Mammary epithelial cell (primary cell): ENCODE measurements at regions of chr1 and their contacts with region 1.

Region 1: DNA sequence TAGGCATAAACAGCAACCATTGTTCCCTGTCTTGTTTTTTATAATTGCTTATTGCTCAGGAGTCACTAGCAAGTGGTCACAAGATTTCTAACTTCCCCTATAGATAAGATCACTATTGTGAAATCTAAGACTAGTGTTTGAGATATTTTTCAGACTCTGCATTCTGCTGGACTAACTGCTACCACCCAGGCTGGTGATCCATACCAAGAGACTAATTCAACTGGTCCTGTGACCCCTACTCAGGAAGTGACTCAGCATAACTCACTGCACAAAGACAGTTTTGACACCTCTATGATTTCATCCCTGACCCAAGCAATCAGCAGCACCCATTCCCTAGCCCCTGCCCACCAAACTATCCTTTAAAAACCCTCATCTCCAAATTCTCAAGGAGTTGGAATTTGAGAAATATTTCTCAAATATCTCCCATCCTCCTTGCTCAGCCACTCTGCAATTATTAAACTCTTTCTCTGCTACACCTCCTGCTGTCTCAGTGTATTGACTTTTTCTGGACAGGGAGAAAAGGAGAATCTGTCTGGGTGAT is 52.7 kb downstream of the TRIM33 start:
- DNase-seq: peak; percentile 88
- H3K4me3 ChIP-seq: no peak overlapping the region
- H3K27ac ChIP-seq: peak overlapping the region; percentile 36
- H3K4me1 ChIP-seq: peaks cover 12% of the 10 kb centered on the region
- H3K27me3 ChIP-seq: no peaks in the 10 kb centered on the region
- CTCF ChIP-seq: no peak

Region 2: DNA sequence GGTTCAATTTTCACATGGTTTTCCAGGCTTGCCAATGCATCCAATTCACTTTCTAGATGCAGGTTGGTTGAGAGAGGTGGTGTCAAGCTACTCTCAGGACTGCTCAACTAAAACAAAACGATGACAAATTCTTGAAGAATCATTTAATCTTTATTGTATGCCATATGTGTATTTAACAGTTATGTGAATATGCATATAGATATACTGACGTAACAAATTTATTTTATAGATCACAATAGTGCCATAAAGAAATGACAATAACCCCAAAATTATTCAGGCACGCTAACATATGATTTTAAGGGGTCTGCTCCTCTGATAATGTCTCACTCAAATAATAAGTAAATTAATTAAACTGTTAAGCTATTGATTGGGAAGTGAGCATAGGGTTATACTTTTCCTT is 52.7 kb before region 1 on chr1:
- CTCF ChIA-PET with region 1: no interaction called
- dilution Hi-C with region 1: loop called (anchors 5 kb)
- in situ Hi-C with region 1: no loop called
- intact Hi-C with region 1: no loop called
- DNase-seq: no peak
- H3K4me3 ChIP-seq: no peak overlapping the region
- H3K27ac ChIP-seq: no peak overlapping the region
- H3K4me1 ChIP-seq: no peaks in the 10 kb centered on the region
- H3K27me3 ChIP-seq: no peaks in the 10 kb centered on the region
- CTCF ChIP-seq: no peak